ENCODE measurements at regions of chr19 and their contacts with region 1.

Region 1: GRCh38 chr19:43668406-43669158 is 1.4 kb downstream of the PLAUR start:
- DNase-seq: no peak
- H3K4me3 Mint-ChIP-seq: peak overlapping the region; percentile 82
- H3K27ac Mint-ChIP-seq: peak overlapping the region; percentile 77
- H3K4me1 Mint-ChIP-seq: peaks cover 50% of the 10 kb centered on the region
- H3K27me3 Mint-ChIP-seq: no peaks in the 10 kb centered on the region

Region 2: DNA sequence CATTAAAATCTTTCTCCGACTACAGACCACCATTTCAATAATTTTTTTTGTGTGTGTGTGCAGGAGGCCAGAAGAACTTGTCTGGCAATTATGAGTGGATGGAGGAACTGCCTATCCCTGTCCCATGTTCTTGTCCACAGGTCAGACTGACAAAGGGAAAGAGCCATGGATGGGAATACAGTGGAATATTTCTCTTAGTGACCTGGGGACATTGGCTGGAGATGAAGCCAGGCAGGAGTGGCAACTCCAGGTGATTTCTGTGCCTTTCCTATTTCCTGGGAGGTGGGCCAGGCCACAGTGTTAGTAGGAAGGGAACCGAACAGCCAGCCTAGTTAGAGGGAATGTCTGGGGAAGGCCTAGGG is 402.9 kb before region 1 on chr19:
- CTCF ChIA-PET with region 1: no interaction called
- intact Hi-C with region 1: no loop called
- DNase-seq: no peak
- H3K4me3 Mint-ChIP-seq: no peak overlapping the region
- H3K27ac Mint-ChIP-seq: no peak overlapping the region
- H3K4me1 Mint-ChIP-seq: no peaks in the 10 kb centered on the region
- H3K27me3 Mint-ChIP-seq: no peaks in the 10 kb centered on the region

Region 3: GRCh38 chr19:43503501-43504425 is 164.8 kb before region 1 on chr19:
- CTCF ChIA-PET with region 1: interaction called, 3 read pairs
- intact Hi-C with region 1: loop called (anchors 1 kb)
- DNase-seq: peak; percentile 99
- H3K4me3 Mint-ChIP-seq: peak overlapping the region; percentile 97
- H3K27ac Mint-ChIP-seq: peak overlapping the region; percentile 92
- H3K4me1 Mint-ChIP-seq: peaks cover 29% of the 10 kb centered on the region
- H3K27me3 Mint-ChIP-seq: no peaks in the 10 kb centered on the region

Region 4: GRCh38 chr19:43532962-43533545 is 135.5 kb before region 1 on chr19 and contains the start of gene ZNF575:
- CTCF ChIA-PET with region 1: interaction called, 3 read pairs
- intact Hi-C with region 1: loop called (anchors 1 kb)
- DNase-seq: peak; percentile 92
- H3K4me3 Mint-ChIP-seq: peak within 1 kb of the TSS; percentile 80
- H3K27ac Mint-ChIP-seq: peak within 1 kb of the TSS; percentile 88
- H3K4me1 Mint-ChIP-seq: peaks cover 19% of the 10 kb centered on the region
- H3K27me3 Mint-ChIP-seq: no peaks in the 10 kb centered on the region
- total RNA-seq, gene ZNF575: 3.1 to 5.2 TPM

Region 5: DNA sequence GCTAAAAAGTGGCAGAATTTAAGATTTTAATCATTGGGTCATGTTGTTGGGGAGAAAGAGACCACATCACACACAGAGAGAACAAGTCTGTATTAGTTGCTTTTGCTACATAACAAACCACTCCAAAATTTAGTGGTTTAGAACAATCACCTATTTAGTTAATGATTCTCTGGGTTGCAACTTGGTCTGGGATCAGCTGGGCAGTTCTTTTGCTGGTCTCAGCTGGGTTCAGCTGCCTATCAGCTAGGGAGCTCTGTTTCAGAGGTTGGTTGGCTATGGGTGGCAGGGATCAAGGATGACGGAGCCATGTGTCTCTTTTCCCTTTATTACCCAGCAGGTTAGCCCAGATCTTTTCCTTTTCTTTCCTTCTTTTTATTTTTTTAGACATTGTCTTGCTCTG is 84.1 kb before region 1 on chr19:
- CTCF ChIA-PET with region 1: no interaction called
- intact Hi-C with region 1: no loop called
- DNase-seq: no peak
- H3K4me3 Mint-ChIP-seq: no peak overlapping the region
- H3K27ac Mint-ChIP-seq: no peak overlapping the region
- H3K4me1 Mint-ChIP-seq: peaks cover 7% of the 10 kb centered on the region
- H3K27me3 Mint-ChIP-seq: no peaks in the 10 kb centered on the region

Region 6: DNA sequence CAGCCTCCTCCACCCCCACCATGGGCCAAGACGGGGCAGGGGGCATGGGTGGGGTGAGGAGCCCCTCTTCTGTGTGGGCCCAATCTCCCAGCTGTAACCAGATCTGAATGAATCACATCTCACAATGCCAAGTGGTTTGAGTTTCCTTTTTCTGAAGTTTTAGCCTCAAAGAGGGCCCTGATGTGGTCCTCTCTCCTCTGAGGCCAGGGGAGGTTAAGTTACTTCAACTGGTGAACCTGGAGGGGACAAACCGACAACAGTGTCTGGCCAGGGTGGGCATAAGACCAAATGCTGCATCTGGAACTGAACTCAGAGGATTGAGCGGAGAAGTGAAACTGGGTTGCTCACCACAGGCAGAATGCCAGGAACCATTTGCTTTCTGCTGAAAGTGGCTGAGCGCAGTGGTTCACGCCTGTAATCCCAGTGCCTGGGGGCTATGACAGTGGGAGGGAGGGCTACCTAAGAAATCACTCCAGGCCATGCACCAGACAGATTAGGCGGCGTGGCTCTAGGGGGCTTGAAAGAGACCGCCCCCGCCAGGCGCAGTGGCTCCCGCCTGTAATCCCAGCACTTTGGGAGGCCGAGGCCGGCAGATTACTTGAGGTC is 31.9 kb after region 1 on chr19:
- CTCF ChIA-PET with region 1: interaction called, 3 read pairs
- intact Hi-C with region 1: loop called (anchors 1 kb)
- DNase-seq: peak; percentile 42
- H3K4me3 Mint-ChIP-seq: peak overlapping the region; percentile 61
- H3K27ac Mint-ChIP-seq: peak overlapping the region; percentile 91
- H3K4me1 Mint-ChIP-seq: peaks cover 26% of the 10 kb centered on the region
- H3K27me3 Mint-ChIP-seq: peaks cover 10% of the 10 kb centered on the region

Region 7: GRCh38 chr19:43754503-43755255 is 86.1 kb after region 1 on chr19 and contains the start of gene SMG9:
- CTCF ChIA-PET with region 1: interaction called, 6 read pairs
- intact Hi-C with region 1: loop called (anchors 1 kb)
- DNase-seq: peak; percentile 98
- H3K4me3 Mint-ChIP-seq: peak within 1 kb of the TSS; percentile 99
- H3K27ac Mint-ChIP-seq: peak within 1 kb of the TSS; percentile 100
- H3K4me1 Mint-ChIP-seq: peaks cover 64% of the 10 kb centered on the region
- H3K27me3 Mint-ChIP-seq: no peaks in the 10 kb centered on the region
- total RNA-seq, gene SMG9: 103 to 111 TPM

Region 8: DNA sequence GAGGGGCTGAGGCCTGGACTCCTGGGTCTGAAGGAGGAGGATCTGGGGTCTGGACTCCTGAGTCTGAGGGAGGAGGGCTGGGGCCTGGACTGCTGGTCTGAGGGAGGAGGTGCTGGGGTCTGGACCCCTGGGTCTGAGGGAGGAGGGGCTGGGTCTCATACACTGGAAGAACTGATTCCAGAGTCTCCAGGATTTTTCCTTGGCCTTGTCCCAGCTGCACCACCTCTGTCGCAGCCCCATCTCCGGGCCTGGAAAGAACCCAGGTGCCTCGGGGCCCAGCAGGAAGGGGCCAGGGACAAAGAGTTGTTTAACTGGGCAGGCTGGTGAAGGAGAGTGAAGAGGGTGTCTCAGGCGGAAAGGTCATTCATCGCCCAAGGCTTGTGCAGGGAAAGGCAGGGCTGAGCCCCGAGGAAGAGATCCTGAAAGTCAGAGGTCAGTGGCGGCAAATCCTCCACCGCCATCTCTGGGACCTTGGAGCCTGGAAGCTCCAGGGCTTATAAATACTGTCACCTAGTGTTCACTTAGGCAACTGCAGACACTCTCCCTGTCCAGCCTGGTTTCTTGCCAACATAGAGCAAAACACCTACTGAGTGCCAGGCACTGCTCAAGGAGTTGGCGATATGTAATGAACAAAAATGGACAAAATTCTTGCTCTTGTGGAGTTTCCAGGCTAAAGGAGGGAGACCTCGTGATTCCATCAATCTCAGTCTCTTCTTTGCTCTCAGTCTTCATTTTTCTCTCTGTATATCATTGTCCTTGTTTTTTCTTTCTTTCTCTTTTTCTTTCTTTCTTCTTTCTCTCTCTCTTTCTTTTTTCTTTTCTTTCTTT is 116.6 kb after region 1 on chr19:
- CTCF ChIA-PET with region 1: interaction called, 5 read pairs
- intact Hi-C with region 1: loop called (anchors 1 kb)
- DNase-seq: peak; percentile 75
- H3K4me3 Mint-ChIP-seq: peak overlapping the region; percentile 66
- H3K27ac Mint-ChIP-seq: peak overlapping the region; percentile 95
- H3K4me1 Mint-ChIP-seq: peaks cover 39% of the 10 kb centered on the region
- H3K27me3 Mint-ChIP-seq: no peaks in the 10 kb centered on the region

Region 9: DNA sequence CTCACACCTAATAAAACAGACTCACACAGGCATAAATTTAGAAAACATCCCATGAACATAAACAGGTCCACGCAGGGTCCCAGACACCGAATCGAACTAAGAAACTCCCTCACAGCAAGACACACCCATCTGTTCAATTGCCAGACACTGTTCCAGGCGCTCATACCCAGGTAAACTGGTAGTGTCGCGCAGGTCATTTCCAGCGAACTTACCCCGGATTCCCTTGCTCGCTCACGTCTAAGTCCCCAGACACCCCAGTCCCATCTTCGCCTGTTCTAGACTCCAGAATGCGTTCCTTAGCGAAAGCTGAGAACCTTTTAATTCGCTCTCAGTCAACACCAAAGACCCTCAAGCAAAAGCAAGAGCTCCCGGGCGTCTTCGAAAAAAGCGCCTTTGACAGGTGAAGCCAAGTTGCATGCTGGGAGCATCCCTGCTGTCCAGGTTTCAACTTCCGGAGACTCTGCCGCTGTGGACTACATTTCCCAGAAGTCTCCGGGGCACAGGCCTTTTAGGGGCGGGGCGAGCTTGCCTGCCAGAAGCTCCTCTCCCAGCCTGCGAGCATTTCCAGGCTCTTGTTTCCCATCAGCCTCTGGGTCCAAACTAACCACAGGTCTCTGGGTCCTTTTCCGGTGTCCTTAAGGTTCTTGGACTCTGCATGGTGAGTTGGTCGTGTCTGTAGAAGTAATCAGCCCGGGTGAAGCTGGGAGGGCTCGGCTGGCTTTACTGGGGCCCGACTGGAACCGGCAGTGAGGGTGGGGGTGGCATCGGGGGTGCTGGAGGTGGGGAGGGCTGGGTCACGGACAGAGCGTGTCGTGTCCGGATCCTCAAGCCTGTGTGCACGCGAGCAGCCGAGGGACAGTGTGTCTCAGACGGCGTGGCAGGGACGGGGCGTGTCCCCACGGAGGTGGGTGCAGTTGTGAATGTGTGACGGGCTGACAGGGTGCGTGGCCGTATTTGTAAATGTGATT is 158.5 kb after region 1 on chr19 and contains the start of gene ZNF283:
- CTCF ChIA-PET with region 1: no interaction called
- intact Hi-C with region 1: loop called (anchors 1 kb)
- DNase-seq: peak; percentile 92
- H3K4me3 Mint-ChIP-seq: peak within 1 kb of the TSS; percentile 88
- H3K27ac Mint-ChIP-seq: peak within 1 kb of the TSS; percentile 75
- H3K4me1 Mint-ChIP-seq: peaks cover 17% of the 10 kb centered on the region
- H3K27me3 Mint-ChIP-seq: no peaks in the 10 kb centered on the region
- total RNA-seq, gene ZNF283: 6.8 to 7.7 TPM